ENCODE measurements at regions of chr7 and their contacts with region 1.

Region 1: DNA sequence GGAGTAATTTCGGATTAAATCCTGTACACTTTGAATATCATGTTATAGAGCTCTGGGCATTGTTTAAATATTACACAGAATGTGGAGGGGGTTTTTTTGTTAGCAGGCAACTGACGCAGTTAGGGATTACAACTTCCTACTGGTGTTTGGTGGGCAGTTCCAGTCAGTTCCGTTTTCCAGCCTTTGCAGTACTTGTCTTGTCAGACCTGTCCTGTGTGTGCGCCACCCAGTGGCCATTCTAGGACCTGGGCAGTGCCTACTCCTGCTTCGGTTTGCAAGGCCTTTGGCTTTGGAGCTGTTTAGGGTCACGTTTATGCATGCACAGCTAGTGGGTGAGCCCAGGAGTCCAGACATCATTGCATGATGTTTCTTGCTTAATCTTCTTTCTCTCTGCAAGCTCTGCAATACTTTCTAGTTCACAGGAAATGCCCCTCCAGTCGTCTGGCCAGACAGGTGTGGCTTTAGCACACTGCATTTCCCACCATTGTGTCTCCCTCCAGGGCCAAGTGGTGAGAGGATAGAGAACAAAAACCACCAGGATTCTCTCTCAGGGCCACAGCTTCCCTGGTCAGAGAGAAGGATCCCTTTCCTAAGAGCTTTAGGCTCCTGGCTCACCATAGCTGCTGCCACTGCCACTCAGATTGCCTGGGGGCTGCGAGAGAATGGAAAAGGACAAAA is 96.5 kb upstream of the TARP start:
- DNase-seq: peak; percentile 85
- ATAC-seq: peak; percentile 97
- H3K4me3 ChIP-seq: no peak overlapping the region
- H3K27ac ChIP-seq: no peak overlapping the region
- H3K4me1 ChIP-seq: no peaks in the 10 kb centered on the region
- H3K27me3 ChIP-seq: no peaks in the 10 kb centered on the region
- CTCF ChIP-seq: peak; percentile 70
- POLR2A ChIP-seq: no peak
- RAD21 ChIP-seq: peak; percentile 35

Region 2: GRCh38 chr7:37901236-37901827 is 468.6 kb before region 1 on chr7:
- CTCF ChIA-PET with region 1: no interaction called
- POLR2A ChIA-PET with region 1: no interaction called
- dilution Hi-C with region 1: no loop called
- in situ Hi-C with region 1: no loop called
- intact Hi-C with region 1: loop called (anchors 5 kb)
- DNase-seq: peak; percentile 15
- ATAC-seq: no peak
- H3K4me3 ChIP-seq: no peak overlapping the region
- H3K27ac ChIP-seq: no peak overlapping the region
- H3K4me1 ChIP-seq: no peaks in the 10 kb centered on the region; the same call in 1 of the 2 replicates
- H3K27me3 ChIP-seq: no peaks in the 10 kb centered on the region
- CTCF ChIP-seq: peak; percentile 47
- POLR2A ChIP-seq: no peak
- RAD21 ChIP-seq: peak; percentile 36; the same call in 1 of the 2 replicates

Region 3: GRCh38 chr7:38335492-38336147 is 34.3 kb before region 1 on chr7:
- CTCF ChIA-PET with region 1: interaction called, 14 read pairs
- POLR2A ChIA-PET with region 1: no interaction called
- dilution Hi-C with region 1: no loop called
- in situ Hi-C with region 1: no loop called
- intact Hi-C with region 1: no loop called
- DNase-seq: peak; percentile 94
- ATAC-seq: peak; percentile 99
- H3K4me3 ChIP-seq: no peak overlapping the region
- H3K27ac ChIP-seq: no peak overlapping the region
- H3K4me1 ChIP-seq: peaks cover 2% of the 10 kb centered on the region; the same call in 1 of the 2 replicates
- H3K27me3 ChIP-seq: no peaks in the 10 kb centered on the region
- CTCF ChIP-seq: peak; percentile 99
- POLR2A ChIP-seq: no peak
- RAD21 ChIP-seq: peak; percentile 78

Region 4: DNA sequence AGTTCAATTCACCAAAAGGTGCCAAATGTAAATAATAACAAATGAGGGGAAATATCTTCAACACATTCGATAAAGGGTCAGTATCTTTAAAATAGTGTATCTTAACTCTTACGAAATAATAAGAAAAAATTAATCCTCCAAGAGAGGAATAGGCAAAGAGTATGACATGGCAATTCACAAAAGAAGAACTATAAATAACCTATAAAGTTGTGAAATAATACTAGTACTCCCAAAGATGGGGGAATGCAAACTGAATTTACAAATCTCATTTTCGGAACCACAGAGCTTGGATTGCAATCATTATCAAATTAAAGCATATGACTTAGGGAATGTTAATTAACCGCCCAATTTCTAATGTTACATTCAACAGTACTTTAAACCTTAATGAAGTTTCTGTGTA is 18.4 kb before region 1 on chr7:
- CTCF ChIA-PET with region 1: no interaction called
- POLR2A ChIA-PET with region 1: no interaction called
- dilution Hi-C with region 1: no loop called
- in situ Hi-C with region 1: no loop called
- intact Hi-C with region 1: no loop called
- DNase-seq: no peak
- ATAC-seq: no peak
- H3K4me3 ChIP-seq: no peak overlapping the region
- H3K27ac ChIP-seq: no peak overlapping the region
- H3K4me1 ChIP-seq: no peaks in the 10 kb centered on the region
- H3K27me3 ChIP-seq: no peaks in the 10 kb centered on the region
- CTCF ChIP-seq: no peak
- POLR2A ChIP-seq: no peak
- RAD21 ChIP-seq: no peak

Region 5: DNA sequence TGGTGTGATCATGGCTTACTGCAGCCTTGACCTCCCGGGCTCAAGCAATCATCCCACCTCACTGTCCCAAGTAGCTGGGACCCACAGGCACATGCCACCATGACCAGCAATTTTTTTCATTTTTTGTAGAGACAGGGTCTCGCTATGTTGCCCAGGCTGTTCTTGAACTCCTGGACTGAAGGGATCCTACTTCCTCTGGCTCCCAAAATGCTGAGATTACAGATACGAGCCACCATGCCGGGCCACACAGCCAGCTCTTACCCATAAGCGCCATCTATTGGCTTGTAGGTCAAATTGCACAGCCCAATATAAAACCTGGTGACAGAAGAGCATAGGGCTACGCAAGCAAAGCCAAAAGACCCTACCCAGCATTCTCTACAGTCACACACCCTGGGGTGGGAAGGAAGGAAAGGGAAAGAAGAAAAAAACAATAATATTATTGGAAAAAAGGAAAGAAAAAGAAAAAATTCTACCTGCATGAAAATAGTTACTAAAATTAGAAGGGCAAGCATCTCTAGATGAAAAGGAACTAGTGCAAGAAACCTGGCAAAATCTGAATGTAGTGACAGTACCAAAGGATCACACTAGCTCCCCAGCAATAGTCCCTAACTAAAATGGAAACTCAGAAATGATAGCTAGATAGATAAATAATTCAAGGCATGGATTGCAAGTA is 290.6 kb after region 1 on chr7:
- CTCF ChIA-PET with region 1: no interaction called
- POLR2A ChIA-PET with region 1: no interaction called
- dilution Hi-C with region 1: no loop called
- in situ Hi-C with region 1: no loop called
- intact Hi-C with region 1: no loop called
- DNase-seq: peak; percentile 56
- ATAC-seq: peak; percentile 94
- H3K4me3 ChIP-seq: no peak overlapping the region
- H3K27ac ChIP-seq: no peak overlapping the region
- H3K4me1 ChIP-seq: no peaks in the 10 kb centered on the region
- H3K27me3 ChIP-seq: no peaks in the 10 kb centered on the region; the same call in 1 of the 2 replicates
- CTCF ChIP-seq: peak; percentile 83
- POLR2A ChIP-seq: no peak
- RAD21 ChIP-seq: peak; percentile 82